CD4-positive, alpha-beta T cell (primary cell): ENCODE measurements at regions of chr5 and their contacts with region 1.

Region 1: GRCh38 chr5:132394667-132395259 is 25.3 kb downstream of the SLC22A5 start:
- DNase-seq: no peak
- ATAC-seq: no peak
- H3K4me3 ChIP-seq: no peak overlapping the region
- H3K4me3 Mint-ChIP-seq: no peak overlapping the region
- H3K27ac ChIP-seq: no peak overlapping the region
- H3K27ac Mint-ChIP-seq: peak overlapping the region; percentile 84
- H3K4me1 ChIP-seq: peaks cover 60% of the 10 kb centered on the region
- H3K4me1 Mint-ChIP-seq: peaks cover 76% of the 10 kb centered on the region
- H3K27me3 ChIP-seq: no peaks in the 10 kb centered on the region
- H3K27me3 Mint-ChIP-seq: no peaks in the 10 kb centered on the region
- CTCF ChIP-seq: no peak

Region 2: GRCh38 chr5:132473019-132473531 is 78.3 kb after region 1 on chr5:
- CTCF ChIA-PET with region 1: no interaction called
- POLR2A ChIA-PET with region 1: interaction called, 27 read pairs
- intact Hi-C with region 1: no loop called
- DNase-seq: peak; percentile 73 to 96 (median 81)
- ATAC-seq: peak; percentile 68
- H3K4me3 ChIP-seq: no peak overlapping the region
- H3K4me3 Mint-ChIP-seq: peak overlapping the region; percentile 74
- H3K27ac ChIP-seq: peak overlapping the region; percentile 70 to 77
- H3K27ac Mint-ChIP-seq: peak overlapping the region; percentile 97
- H3K4me1 ChIP-seq: peaks cover 92% of the 10 kb centered on the region
- H3K4me1 Mint-ChIP-seq: peaks cover 96% of the 10 kb centered on the region
- H3K27me3 ChIP-seq: no peaks in the 10 kb centered on the region
- H3K27me3 Mint-ChIP-seq: peaks cover 10% of the 10 kb centered on the region
- CTCF ChIP-seq: no peak